ENCODE measurements at regions of chr1 and their contacts with region 1.

Region 1: DNA sequence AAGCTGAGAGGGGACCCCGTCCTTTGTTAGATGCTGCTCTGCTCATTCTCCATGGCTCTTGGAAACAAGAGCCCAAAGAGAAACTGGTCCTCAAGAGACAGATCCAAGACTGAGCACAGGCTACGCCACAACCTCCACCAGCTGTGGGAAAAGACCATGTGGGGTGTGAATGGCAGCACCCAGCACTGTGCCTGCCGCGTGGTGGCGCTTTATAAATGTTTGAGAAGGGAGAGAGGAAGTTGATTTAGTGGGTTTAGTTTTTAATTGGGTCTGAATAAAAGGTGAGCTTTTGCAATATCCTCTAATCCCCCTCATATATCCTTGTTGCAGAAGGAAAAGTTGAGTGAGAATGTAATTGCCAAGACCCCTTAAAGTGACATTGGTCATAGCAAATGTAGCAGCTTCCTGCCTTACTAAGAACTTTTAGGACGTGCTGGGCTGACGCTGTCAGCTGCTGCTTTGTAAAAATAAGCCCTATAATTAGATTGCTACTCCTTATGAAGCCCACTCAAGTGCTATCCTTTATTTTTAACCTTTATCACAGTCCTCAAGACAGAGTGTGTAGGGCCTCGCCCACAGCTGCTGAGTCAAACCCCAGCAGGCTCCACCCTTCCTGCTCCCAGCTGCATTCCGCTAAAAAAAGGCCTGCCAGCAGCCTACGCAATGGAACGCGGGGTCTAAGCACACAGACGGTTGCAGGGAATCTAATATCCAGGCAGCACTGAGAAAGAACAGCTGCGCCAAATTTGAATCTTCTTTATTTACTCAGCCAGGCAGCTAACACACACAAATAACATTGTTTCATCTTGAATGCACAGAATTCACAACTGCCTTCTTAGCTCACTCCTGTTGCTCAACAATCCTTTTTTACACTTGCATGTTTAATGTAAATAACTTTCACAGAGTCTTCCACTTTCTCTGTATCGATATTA is 47.4 kb upstream of the PRDX6 start:
- DNase-seq: peak; percentile 50 to 62 (median 59)
- H3K4me3 ChIP-seq: peak overlapping the region in 1 of 2 donors; percentile 26
- H3K4me3 Mint-ChIP-seq: peak overlapping the region; percentile 14 to 76 (median 60)
- H3K27ac ChIP-seq: peak overlapping the region; percentile 11
- H3K27ac Mint-ChIP-seq: peak overlapping the region; percentile 22 to 87 (median 75)
- H3K4me1 ChIP-seq: peaks cover 17% of the 10 kb centered on the region
- H3K4me1 Mint-ChIP-seq: peaks cover 16 to 26% (median 16%) of the 10 kb centered on the region in 4 donors
- H3K27me3 ChIP-seq: no peaks in the 10 kb centered on the region
- H3K27me3 Mint-ChIP-seq: no peaks in the 10 kb centered on the region

Region 2: GRCh38 chr1:173009597-173009996 is 420.1 kb before region 1 on chr1:
- CTCF ChIA-PET with region 1: no interaction called
- POLR2A ChIA-PET with region 1: no interaction called
- intact Hi-C with region 1: no loop called
- DNase-seq: no peak
- H3K4me3 ChIP-seq: no peak overlapping the region
- H3K4me3 Mint-ChIP-seq: no peak overlapping the region
- H3K27ac ChIP-seq: no peak overlapping the region
- H3K27ac Mint-ChIP-seq: no peak overlapping the region
- H3K4me1 ChIP-seq: no peaks in the 10 kb centered on the region
- H3K4me1 Mint-ChIP-seq: peaks cover 6 to 17% (median 8%) of the 10 kb centered on the region in 4 donors
- H3K27me3 ChIP-seq: no peaks in the 10 kb centered on the region
- H3K27me3 Mint-ChIP-seq: peaks cover 0 to 12% of the 10 kb centered on the region in 2 donors

Region 3: DNA sequence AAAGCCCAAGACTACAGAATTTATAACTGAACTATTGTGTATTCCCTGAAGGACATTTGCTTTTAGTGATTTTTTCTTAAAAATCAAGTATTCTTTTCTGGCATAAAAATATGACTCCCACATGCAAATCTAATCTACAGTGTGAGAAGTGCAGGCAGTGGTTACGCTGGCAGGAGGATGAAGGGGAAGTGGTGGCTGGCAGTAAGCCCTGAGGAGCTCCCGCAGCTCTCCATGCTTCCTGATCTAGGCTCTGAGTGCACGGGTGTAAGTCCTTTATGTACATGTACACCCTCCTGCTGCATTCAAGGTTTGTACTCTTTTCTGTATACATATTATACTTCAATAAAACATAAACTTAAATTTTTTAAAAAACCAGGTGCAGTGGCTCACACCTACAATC is 20.1 kb before region 1 on chr1:
- CTCF ChIA-PET with region 1: interaction called, 10 read pairs
- POLR2A ChIA-PET with region 1: no interaction called
- intact Hi-C with region 1: no loop called
- DNase-seq: peak in 2 of 5 donors; percentile 14 to 15
- H3K4me3 ChIP-seq: no peak overlapping the region
- H3K4me3 Mint-ChIP-seq: peak overlapping the region in 2 of 8 donors; percentile 26 to 61
- H3K27ac ChIP-seq: no peak overlapping the region
- H3K27ac Mint-ChIP-seq: peak overlapping the region in 5 of 7 donors; percentile 19 to 80 (median 32)
- H3K4me1 ChIP-seq: peaks cover 29% of the 10 kb centered on the region
- H3K4me1 Mint-ChIP-seq: peaks cover 20 to 33% (median 26%) of the 10 kb centered on the region in 4 donors
- H3K27me3 ChIP-seq: no peaks in the 10 kb centered on the region
- H3K27me3 Mint-ChIP-seq: no peaks in the 10 kb centered on the region

Region 4: DNA sequence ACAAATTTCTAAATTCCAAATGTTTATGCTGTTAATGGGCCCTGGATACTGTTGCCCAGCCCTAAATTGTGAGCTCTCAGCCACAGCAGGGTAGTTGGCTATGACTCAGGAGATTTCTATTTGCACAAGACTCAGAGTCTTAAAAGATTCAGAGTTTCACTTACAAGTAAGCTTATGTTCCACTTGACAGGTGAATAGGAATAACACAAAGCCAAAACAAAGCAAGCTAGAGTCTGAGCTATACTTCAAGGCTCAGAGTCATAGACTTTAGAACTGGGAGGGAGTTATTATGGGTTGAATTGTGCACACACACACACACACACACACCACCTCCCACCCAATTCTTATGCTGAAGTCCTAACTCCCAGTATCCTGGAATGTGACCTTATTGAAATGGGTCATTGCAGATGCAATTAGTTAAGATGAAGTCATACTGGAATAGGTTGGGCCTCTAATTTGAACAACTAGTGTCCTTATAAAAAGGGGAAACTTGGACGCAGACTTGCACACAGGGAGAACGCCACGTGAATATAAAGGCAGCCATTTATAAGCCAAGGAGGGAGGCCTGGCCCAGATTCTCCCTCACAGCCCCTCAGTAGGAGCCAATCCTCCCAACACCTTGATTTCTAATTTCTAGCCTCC is 77.6 kb after region 1 on chr1:
- CTCF ChIA-PET with region 1: interaction called, 13 read pairs
- POLR2A ChIA-PET with region 1: no interaction called
- intact Hi-C with region 1: no loop called
- DNase-seq: no peak
- H3K4me3 ChIP-seq: no peak overlapping the region
- H3K4me3 Mint-ChIP-seq: no peak overlapping the region
- H3K27ac ChIP-seq: no peak overlapping the region
- H3K27ac Mint-ChIP-seq: no peak overlapping the region
- H3K4me1 ChIP-seq: no peaks in the 10 kb centered on the region
- H3K4me1 Mint-ChIP-seq: no peaks in the 10 kb centered on the region
- H3K27me3 ChIP-seq: no peaks in the 10 kb centered on the region
- H3K27me3 Mint-ChIP-seq: no peaks in the 10 kb centered on the region

Region 5: GRCh38 chr1:173714759-173715537 is 285.2 kb after region 1 on chr1 and contains the start of gene KLHL20:
- CTCF ChIA-PET with region 1: interaction called, 16 read pairs
- POLR2A ChIA-PET with region 1: interaction called, 12 read pairs
- intact Hi-C with region 1: loop called (anchors 1 kb)
- DNase-seq: peak; percentile 89 to 93 (median 91)
- H3K4me3 ChIP-seq: peak within 1 kb of the TSS; percentile 47 to 73
- H3K4me3 Mint-ChIP-seq: peak within 1 kb of the TSS; percentile 95 to 100 (median 97)
- H3K27ac ChIP-seq: peak within 1 kb of the TSS; percentile 78
- H3K27ac Mint-ChIP-seq: peak within 1 kb of the TSS; percentile 92 to 98 (median 97)
- H3K4me1 ChIP-seq: peaks cover 34% of the 10 kb centered on the region
- H3K4me1 Mint-ChIP-seq: peaks cover 18 to 33% (median 25%) of the 10 kb centered on the region in 4 donors
- H3K27me3 ChIP-seq: peaks cover 5% of the 10 kb centered on the region
- H3K27me3 Mint-ChIP-seq: peaks cover 14 to 15% of the 10 kb centered on the region in 2 donors
- total RNA-seq, gene KLHL20: 41.0 to 43.9 TPM

Region 6: GRCh38 chr1:173779936-173780335 is 350.2 kb after region 1 on chr1:
- CTCF ChIA-PET with region 1: interaction called, 8 read pairs
- POLR2A ChIA-PET with region 1: no interaction called
- intact Hi-C with region 1: loop called (anchors 5 kb)
- DNase-seq: no peak
- H3K4me3 ChIP-seq: no peak overlapping the region
- H3K4me3 Mint-ChIP-seq: no peak overlapping the region
- H3K27ac ChIP-seq: no peak overlapping the region
- H3K27ac Mint-ChIP-seq: peak overlapping the region in 2 of 7 donors; percentile 42 to 74
- H3K4me1 ChIP-seq: no peaks in the 10 kb centered on the region
- H3K4me1 Mint-ChIP-seq: peaks cover 0 to 6% (median 2%) of the 10 kb centered on the region in 4 donors
- H3K27me3 ChIP-seq: no peaks in the 10 kb centered on the region
- H3K27me3 Mint-ChIP-seq: no peaks in the 10 kb centered on the region

Region 7: DNA sequence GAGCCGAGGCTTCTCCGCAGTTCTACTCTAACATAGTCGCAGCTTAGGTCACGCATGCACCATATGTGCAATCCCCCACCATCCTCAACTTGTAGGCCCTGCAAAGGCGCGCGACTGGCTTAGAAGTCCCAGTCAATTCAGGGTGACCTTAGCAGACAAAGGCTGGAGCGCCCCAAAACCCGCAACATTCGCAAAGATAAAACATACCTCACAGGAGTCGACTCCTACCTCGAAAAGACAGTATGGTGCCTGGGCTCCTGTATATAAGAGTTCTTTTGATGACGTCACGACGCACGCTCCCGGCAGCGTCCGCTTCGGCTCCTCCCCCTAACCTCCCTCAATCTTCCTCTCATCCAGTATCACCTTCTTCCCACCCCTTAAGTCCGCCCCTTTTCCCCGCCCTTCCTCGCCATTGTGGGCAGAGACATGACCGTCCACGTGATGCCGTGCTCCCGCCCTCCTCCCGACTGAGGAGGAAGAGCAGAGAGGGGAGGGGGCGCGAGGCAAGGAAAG is 438.1 kb after region 1 on chr1 and contains the start of gene GAS5:
- CTCF ChIA-PET with region 1: interaction called, 5 read pairs
- POLR2A ChIA-PET with region 1: interaction called, 4 read pairs
- intact Hi-C with region 1: loop called (anchors 2 kb)
- DNase-seq: peak; percentile 98 to 100 (median 99)
- H3K4me3 ChIP-seq: peak within 1 kb of the TSS; percentile 71 to 79
- H3K4me3 Mint-ChIP-seq: peak within 1 kb of the TSS; percentile 95 to 99 (median 96)
- H3K27ac ChIP-seq: peak within 1 kb of the TSS; percentile 89
- H3K27ac Mint-ChIP-seq: peak within 1 kb of the TSS; percentile 94 to 99 (median 97)
- H3K4me1 ChIP-seq: peaks cover 84% of the 10 kb centered on the region
- H3K4me1 Mint-ChIP-seq: peaks cover 52 to 92% (median 63%) of the 10 kb centered on the region in 4 donors
- H3K27me3 ChIP-seq: no peaks in the 10 kb centered on the region
- H3K27me3 Mint-ChIP-seq: no peaks in the 10 kb centered on the region
- total RNA-seq, gene GAS5: 676 to 709 TPM

Region 8: DNA sequence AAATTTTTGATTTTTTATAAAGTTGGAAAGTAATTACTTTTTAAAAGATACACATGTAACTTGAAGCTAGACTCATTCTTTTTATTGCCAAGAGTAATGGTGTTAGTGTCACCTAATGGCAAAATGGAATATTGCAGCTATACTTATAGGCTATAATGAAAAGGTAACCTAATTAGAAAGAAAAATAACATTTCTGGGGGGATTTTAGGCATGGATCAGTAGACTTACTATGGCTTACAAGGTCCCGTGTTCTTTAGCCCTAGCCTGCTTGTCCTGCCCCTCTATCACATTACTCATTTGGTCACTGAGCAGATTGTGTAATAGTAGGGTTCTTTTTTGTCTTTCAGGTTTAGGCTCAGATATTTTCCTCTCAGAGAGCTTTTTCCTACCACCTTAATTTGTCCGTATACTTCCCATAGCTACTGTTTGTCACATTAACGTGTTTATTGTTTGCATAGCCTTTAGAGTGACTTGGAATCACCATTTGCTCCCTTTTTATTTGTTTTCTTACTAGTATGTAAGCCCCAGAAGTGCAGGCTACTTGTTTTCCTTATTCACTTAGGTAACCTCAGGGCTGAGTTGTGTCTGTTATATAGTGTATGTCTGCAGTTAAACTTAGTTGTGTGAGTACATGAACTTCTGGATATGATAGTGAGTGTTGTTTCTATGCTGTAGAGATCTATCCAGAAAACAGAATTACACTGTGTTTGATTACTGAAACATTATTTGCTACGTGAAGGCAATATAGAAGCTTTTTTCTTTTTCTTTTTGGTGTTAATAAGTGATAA is 788.2 kb after region 1 on chr1:
- CTCF ChIA-PET with region 1: interaction called, 10 read pairs
- POLR2A ChIA-PET with region 1: no interaction called
- intact Hi-C with region 1: loop called (anchors 1 kb)
- DNase-seq: peak in 4 of 5 donors; percentile 37 to 45 (median 40)
- H3K4me3 ChIP-seq: no peak overlapping the region
- H3K4me3 Mint-ChIP-seq: no peak overlapping the region
- H3K27ac ChIP-seq: no peak overlapping the region
- H3K27ac Mint-ChIP-seq: no peak overlapping the region
- H3K4me1 ChIP-seq: no peaks in the 10 kb centered on the region
- H3K4me1 Mint-ChIP-seq: peaks cover 0 to 5% (median 2%) of the 10 kb centered on the region in 4 donors
- H3K27me3 ChIP-seq: no peaks in the 10 kb centered on the region
- H3K27me3 Mint-ChIP-seq: no peaks in the 10 kb centered on the region